ENCODE measurements at regions of chr15 and their contacts with region 1.

Region 1: DNA sequence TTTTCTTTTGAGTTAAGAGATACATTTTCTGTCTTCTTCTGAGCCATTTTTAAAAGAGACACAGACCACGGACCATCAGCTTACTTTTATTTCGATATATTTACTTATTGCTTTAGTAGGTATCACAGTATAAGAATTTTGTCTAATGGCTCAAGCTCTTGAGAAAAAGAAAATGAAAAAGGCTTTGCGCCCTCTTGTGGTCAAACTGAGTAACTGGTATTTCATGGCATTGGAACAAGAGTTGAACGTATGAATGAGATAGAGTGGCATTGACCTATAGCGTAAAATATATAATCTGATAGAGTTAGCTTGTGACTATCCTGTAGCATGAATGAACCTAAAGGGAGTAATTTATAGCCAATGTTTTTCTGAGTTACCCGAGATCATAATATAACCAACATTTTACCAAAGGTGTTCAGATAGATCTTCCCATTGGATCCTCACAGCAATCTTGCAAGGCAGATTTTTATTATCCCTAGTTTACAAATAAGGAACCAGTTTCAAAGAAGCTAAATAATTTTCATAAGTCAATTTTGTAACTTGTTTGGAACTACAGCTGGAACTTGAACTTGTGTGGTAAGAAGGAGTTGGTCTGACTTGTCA is 154.6 kb downstream of the POLR2M start:
- DNase-seq: peak; percentile 82
- H3K4me3 Mint-ChIP-seq: no peak overlapping the region
- H3K27ac Mint-ChIP-seq: no peak overlapping the region
- H3K4me1 Mint-ChIP-seq: peaks cover 7% of the 10 kb centered on the region
- H3K27me3 Mint-ChIP-seq: peaks cover 31% of the 10 kb centered on the region

Region 2: GRCh38 chr15:57732526-57733331 is 128.4 kb before region 1 on chr15:
- intact Hi-C with region 1: loop called (anchors 1 kb)
- DNase-seq: peak; percentile 84
- H3K4me3 Mint-ChIP-seq: no peak overlapping the region
- H3K27ac Mint-ChIP-seq: no peak overlapping the region
- H3K4me1 Mint-ChIP-seq: peaks cover 7% of the 10 kb centered on the region
- H3K27me3 Mint-ChIP-seq: peaks cover 3% of the 10 kb centered on the region

Measured in activated CD4-positive, alpha-beta T cell treated with anti-CD3 and anti-CD28 coated beads, Interleukin-2, amount 10 ng/mL, durations not matched to agents 24 days and 14 days (primary cell).